ENCODE measurements at regions of chr4 and their contacts with region 1.

Region 1: GRCh38 chr4:124111922-124112321 is 600.6 kb downstream of the ANKRD50 start:
- DNase-seq: peak; percentile 29
- ATAC-seq: no peak
- H3K4me3 ChIP-seq: no peak overlapping the region
- H3K4me3 Mint-ChIP-seq: no peak overlapping the region
- H3K27ac ChIP-seq: no peak overlapping the region
- H3K27ac Mint-ChIP-seq: no peak overlapping the region
- H3K4me1 ChIP-seq: no peaks in the 10 kb centered on the region
- H3K4me1 Mint-ChIP-seq: no peaks in the 10 kb centered on the region
- H3K27me3 ChIP-seq: no peaks in the 10 kb centered on the region
- H3K27me3 Mint-ChIP-seq: no peaks in the 10 kb centered on the region
- CTCF ChIP-seq: peak; percentile 17

Region 2: GRCh38 chr4:123102897-123103471 is 1008.9 kb before region 1 on chr4:
- CTCF ChIA-PET with region 1: no interaction called
- POLR2A ChIA-PET with region 1: no interaction called
- intact Hi-C with region 1: loop called (anchors 5 kb)
- DNase-seq: peak; percentile 45
- ATAC-seq: no peak
- H3K4me3 ChIP-seq: no peak overlapping the region
- H3K4me3 Mint-ChIP-seq: no peak overlapping the region
- H3K27ac ChIP-seq: no peak overlapping the region
- H3K27ac Mint-ChIP-seq: no peak overlapping the region
- H3K4me1 ChIP-seq: no peaks in the 10 kb centered on the region
- H3K4me1 Mint-ChIP-seq: peaks cover 1% of the 10 kb centered on the region
- H3K27me3 ChIP-seq: no peaks in the 10 kb centered on the region
- H3K27me3 Mint-ChIP-seq: no peaks in the 10 kb centered on the region
- CTCF ChIP-seq: peak; percentile 80

Region 3: DNA sequence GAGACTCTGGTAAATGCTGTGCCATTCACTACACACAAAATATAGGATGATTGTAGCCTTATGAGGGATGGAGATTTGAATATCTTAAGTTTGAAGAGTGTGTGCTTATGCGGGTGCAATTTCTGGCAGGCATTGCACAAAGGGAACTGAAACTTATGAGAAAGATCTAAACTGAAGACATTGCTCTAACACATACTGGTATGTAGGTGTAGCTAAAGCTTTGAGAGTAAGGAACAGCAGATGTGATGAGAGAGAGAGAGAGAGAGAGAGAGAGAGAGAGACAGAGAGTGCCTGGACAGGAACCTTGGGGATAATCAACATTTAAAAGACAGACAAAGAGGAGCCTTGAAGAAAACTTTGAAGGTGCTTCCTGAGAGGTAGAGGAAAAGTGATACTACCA is 335.7 kb before region 1 on chr4:
- CTCF ChIA-PET with region 1: no interaction called
- POLR2A ChIA-PET with region 1: no interaction called
- intact Hi-C with region 1: loop called (anchors 2 kb)
- DNase-seq: peak; percentile 10
- ATAC-seq: peak; percentile 28
- H3K4me3 ChIP-seq: no peak overlapping the region
- H3K4me3 Mint-ChIP-seq: no peak overlapping the region
- H3K27ac ChIP-seq: no peak overlapping the region
- H3K27ac Mint-ChIP-seq: no peak overlapping the region
- H3K4me1 ChIP-seq: no peaks in the 10 kb centered on the region
- H3K4me1 Mint-ChIP-seq: peaks cover 6% of the 10 kb centered on the region
- H3K27me3 ChIP-seq: no peaks in the 10 kb centered on the region
- H3K27me3 Mint-ChIP-seq: peaks cover 12% of the 10 kb centered on the region
- CTCF ChIP-seq: no peak